HepG2 (cell line): ENCODE measurements at regions of chr5 and their contacts with region 1.

Region 1: DNA sequence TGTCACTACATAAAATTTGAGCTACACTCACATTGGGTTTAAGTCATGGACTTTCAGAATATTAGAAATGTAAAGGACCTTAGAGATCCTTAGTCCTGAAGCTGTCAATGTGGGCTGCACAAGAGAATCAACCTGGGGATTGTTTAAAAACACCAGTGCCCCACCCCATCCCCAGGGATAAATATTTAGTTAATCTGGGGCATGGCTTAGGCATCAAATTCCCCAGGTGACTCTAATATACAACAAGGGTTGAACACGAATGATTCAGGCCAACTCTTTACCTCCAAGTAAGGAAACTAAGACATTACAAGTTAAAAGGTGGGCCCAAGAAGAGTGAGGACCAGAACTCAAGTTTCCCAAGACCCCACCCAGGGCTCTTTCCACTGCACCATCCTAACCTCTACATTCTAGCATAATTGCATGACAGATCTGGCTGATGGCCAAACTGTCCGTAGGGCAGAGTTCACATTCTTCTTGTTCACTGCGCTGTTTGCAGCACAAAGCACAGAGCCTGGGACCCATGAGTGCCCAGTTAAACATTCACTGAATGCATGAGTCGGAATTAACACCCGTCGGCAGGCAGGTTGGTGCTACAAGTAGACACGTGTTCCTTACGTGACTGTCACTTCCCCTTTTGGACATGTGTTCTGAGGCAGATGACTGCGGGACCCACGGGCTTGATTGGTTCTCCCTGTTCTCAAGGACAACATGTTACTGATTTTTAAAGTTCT is 25.2 kb downstream of the CYFIP2 start:
- DNase-seq: peak; percentile 99
- ATAC-seq: peak; percentile 96
- H3K4me3 ChIP-seq: no peak overlapping the region; a peak in 1 of 6 replicates
- H3K27ac ChIP-seq: peak overlapping the region; percentile 73
- H3K4me1 ChIP-seq: peaks cover 67% of the 10 kb centered on the region
- H3K27me3 ChIP-seq: no peaks in the 10 kb centered on the region
- CTCF ChIP-seq: no peak
- EP300 ChIP-seq: peak in 1 of 2 experiments; percentile 77; a peak in 2 of 4 replicates
- POLR2A ChIP-seq: no peak
- RAD21 ChIP-seq: no peak

Region 2: DNA sequence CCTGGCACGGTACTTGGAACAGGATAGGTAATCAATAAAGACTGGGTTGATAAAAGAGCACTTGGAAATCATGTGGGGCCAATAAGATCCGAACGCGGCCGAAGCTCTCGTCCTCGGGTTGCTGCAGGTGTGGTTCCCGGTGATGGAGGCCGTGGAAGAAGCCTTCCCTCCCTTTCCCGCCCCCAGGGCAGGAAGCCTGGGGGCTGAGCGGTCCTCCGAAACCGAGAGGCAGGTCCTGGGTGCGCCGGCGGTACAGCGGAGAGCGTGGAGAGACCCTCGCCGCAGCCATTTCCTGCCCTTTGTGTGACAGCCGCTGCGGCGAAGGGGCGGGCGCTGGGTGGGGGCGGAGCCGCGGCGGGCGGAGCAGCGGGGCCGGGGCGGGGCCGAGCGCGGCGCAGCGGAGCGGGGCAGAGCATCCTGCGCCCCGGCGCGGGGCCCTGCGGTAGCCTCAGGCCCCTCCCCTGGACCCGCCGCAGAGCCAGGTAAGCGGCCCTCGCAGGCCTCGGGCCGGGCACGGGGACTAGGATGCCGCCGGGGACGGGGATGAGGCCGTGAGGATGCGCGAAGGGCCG is 25.3 kb before region 1 on chr5 and contains the start of gene CYFIP2:
- CTCF ChIA-PET with region 1: no interaction called
- POLR2A ChIA-PET with region 1: no interaction called
- in situ Hi-C with region 1: no loop called
- intact Hi-C with region 1: loop called (anchors 1 kb)
- DNase-seq: no peak
- ATAC-seq: peak; percentile 94
- H3K4me3 ChIP-seq: peak within 1 kb of the TSS; percentile 74 to 84 (median 83)
- H3K27ac ChIP-seq: no peak within 1 kb of the TSS
- H3K4me1 ChIP-seq: peaks cover 58% of the 10 kb centered on the region
- H3K27me3 ChIP-seq: peaks cover 0 to 1% of the 10 kb centered on the region in 2 experiments; a peak in 2 of 5 replicates
- CTCF ChIP-seq: 0 out of 2 replicates have a peak, but pooled peaks have one; percentile 36
- EP300 ChIP-seq: no peak
- POLR2A ChIP-seq: peak in 1 of 2 experiments; percentile 73; a peak in 2 of 4 replicates
- RAD21 ChIP-seq: no peak
- total RNA-seq, gene CYFIP2: 30.3 and 40.2 TPM in 2 replicates

Region 3: GRCh38 chr5:157303667-157304327 is 12.7 kb after region 1 on chr5:
- CTCF ChIA-PET with region 1: no interaction called
- POLR2A ChIA-PET with region 1: no interaction called
- in situ Hi-C with region 1: no loop called
- intact Hi-C with region 1: no loop called
- DNase-seq: no peak
- ATAC-seq: no peak
- H3K4me3 ChIP-seq: no peak overlapping the region
- H3K27ac ChIP-seq: no peak overlapping the region
- H3K4me1 ChIP-seq: 0 out of 2 replicates have a peak, but pooled peaks cover 7% of the 10 kb centered on the region
- H3K27me3 ChIP-seq: no peaks in the 10 kb centered on the region
- CTCF ChIP-seq: peak; percentile 28; the same call in 1 of the 2 replicates
- EP300 ChIP-seq: no peak
- POLR2A ChIP-seq: no peak
- RAD21 ChIP-seq: no peak

Region 4: GRCh38 chr5:157335534-157336422 is 44.6 kb after region 1 on chr5:
- CTCF ChIA-PET with region 1: no interaction called
- POLR2A ChIA-PET with region 1: no interaction called
- in situ Hi-C with region 1: no loop called
- intact Hi-C with region 1: no loop called
- DNase-seq: no peak
- ATAC-seq: peak; percentile 55
- H3K4me3 ChIP-seq: no peak overlapping the region
- H3K27ac ChIP-seq: peak overlapping the region; percentile 35
- H3K4me1 ChIP-seq: peaks cover 14% of the 10 kb centered on the region
- H3K27me3 ChIP-seq: no peaks in the 10 kb centered on the region
- CTCF ChIP-seq: no peak
- EP300 ChIP-seq: no peak
- POLR2A ChIP-seq: no peak
- RAD21 ChIP-seq: no peak

Region 5: GRCh38 chr5:157354800-157355199 is 63.7 kb after region 1 on chr5:
- CTCF ChIA-PET with region 1: no interaction called
- POLR2A ChIA-PET with region 1: no interaction called
- in situ Hi-C with region 1: no loop called
- intact Hi-C with region 1: no loop called
- DNase-seq: no peak
- ATAC-seq: peak; percentile 65
- H3K4me3 ChIP-seq: no peak overlapping the region
- H3K27ac ChIP-seq: no peak overlapping the region
- H3K4me1 ChIP-seq: no peaks in the 10 kb centered on the region
- H3K27me3 ChIP-seq: no peaks in the 10 kb centered on the region
- CTCF ChIP-seq: peak; percentile 41
- EP300 ChIP-seq: no peak
- POLR2A ChIP-seq: no peak
- RAD21 ChIP-seq: no peak